ENCODE measurements at regions of chr13 and their contacts with region 1.

Region 1: GRCh38 chr13:75372517-75372916 is 109.5 kb downstream of the TBC1D4 start:
- DNase-seq: peak; percentile 64
- ATAC-seq: peak; percentile 20
- H3K4me3 ChIP-seq: no peak overlapping the region
- H3K27ac ChIP-seq: no peak overlapping the region
- H3K4me1 ChIP-seq: peaks cover 12% of the 10 kb centered on the region
- H3K27me3 ChIP-seq: no peaks in the 10 kb centered on the region
- CTCF ChIP-seq: peak; percentile 60

Region 2: DNA sequence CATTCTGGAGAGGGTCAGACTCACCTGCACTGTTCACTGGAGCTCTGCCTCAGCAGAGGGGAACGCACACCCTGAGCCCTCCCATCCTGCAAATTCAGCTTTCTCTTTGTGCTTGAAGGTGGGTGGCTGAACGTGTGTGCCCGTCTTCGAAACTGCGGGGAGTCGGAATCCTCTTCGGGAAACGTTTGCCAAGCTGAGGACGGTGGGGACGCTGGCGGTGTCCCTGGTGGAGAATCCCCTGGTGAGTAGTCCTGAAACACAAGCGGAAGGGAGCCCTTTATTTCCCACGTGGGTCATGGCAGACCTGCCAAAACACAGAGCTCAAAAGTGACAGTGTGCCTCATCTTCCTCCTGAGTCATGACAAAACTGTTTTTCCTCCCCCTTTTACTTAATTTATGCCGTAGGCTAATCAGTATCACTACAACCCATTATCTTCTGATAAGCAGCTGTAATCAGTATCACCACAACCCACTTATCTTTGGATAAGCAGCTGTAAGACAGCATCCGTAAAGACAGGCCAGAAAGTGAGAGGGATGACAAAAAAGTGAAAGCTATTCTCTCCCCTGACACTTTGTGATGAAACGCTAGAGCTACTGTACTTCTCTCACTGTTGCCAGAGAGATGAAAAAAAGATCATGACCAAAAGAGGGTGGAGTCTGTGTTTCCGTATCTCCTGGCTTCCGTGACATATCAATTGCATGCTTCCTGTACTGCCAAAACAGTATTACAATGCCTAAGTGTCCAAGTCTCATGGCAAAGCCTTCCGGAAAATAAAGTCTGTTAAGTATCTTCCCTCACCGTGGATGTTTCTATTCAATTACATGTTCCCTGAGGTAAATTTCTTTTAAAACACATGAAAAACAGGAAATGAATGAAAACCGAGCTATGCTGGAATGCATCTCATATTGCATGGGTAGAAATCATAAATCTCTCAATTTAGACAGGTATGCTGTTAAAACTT is 46.1 kb before region 1 on chr13:
- CTCF ChIA-PET with region 1: no interaction called
- POLR2A ChIA-PET with region 1: no interaction called
- intact Hi-C with region 1: no loop called
- DNase-seq: no peak
- ATAC-seq: no peak
- H3K4me3 ChIP-seq: no peak overlapping the region
- H3K27ac ChIP-seq: no peak overlapping the region
- H3K4me1 ChIP-seq: no peaks in the 10 kb centered on the region
- H3K27me3 ChIP-seq: no peaks in the 10 kb centered on the region
- CTCF ChIP-seq: no peak

Region 3: DNA sequence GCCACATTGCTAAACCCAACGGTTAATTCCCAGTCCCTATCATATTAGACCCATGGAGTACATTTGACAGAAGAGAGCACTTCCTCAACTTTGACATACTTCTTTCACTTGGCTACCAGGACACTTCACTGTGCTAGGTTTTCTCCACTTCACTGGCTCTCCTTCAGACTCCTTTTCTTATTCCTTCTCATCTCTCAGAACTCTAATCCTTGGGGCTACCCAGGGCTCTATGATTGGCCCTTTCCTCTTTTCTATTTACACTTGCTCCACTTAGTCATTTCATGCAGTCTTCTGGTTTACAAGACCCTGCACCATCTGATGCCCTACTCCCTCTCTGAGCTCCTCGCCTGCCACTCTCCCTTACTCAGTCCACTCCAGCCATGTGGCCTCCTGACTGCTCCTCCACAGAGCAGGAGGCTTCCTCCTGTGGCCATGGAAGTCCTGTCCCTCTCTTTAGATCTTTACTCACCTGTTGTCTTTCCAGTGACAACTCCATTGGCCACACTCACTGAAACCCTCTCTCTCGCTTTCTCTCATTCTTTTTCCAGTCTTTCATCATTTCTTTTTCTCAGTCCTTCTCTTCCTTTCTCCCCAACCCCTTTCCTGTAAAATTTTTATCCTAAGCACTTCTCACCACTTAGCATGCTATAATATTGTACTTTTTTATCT is 19.0 kb after region 1 on chr13:
- CTCF ChIA-PET with region 1: interaction called, 10 read pairs
- POLR2A ChIA-PET with region 1: no interaction called
- intact Hi-C with region 1: no loop called
- DNase-seq: no peak
- ATAC-seq: no peak; the same call in 1 of the 2 replicates
- H3K4me3 ChIP-seq: no peak overlapping the region
- H3K27ac ChIP-seq: no peak overlapping the region
- H3K4me1 ChIP-seq: no peaks in the 10 kb centered on the region
- H3K27me3 ChIP-seq: no peaks in the 10 kb centered on the region
- CTCF ChIP-seq: no peak

Region 4: GRCh38 chr13:75549262-75550158 is 177.0 kb after region 1 on chr13 and contains the start of gene UCHL3:
- CTCF ChIA-PET with region 1: interaction called, 4 read pairs
- POLR2A ChIA-PET with region 1: no interaction called
- intact Hi-C with region 1: loop called (anchors 5 kb)
- DNase-seq: peak; percentile 96
- ATAC-seq: peak; percentile 86
- H3K4me3 ChIP-seq: peak within 1 kb of the TSS; percentile 89
- H3K27ac ChIP-seq: peak within 1 kb of the TSS; percentile 75
- H3K4me1 ChIP-seq: peaks cover 37% of the 10 kb centered on the region
- H3K27me3 ChIP-seq: no peaks in the 10 kb centered on the region
- CTCF ChIP-seq: peak; percentile 73
- total RNA-seq, gene UCHL3: 38.6 and 50.0 TPM in 2 replicates

Measured in PC-3 (cell line).